HEK293T (cell line): ENCODE measurements at regions of chr11 and their contacts with region 1.

Region 1: DNA sequence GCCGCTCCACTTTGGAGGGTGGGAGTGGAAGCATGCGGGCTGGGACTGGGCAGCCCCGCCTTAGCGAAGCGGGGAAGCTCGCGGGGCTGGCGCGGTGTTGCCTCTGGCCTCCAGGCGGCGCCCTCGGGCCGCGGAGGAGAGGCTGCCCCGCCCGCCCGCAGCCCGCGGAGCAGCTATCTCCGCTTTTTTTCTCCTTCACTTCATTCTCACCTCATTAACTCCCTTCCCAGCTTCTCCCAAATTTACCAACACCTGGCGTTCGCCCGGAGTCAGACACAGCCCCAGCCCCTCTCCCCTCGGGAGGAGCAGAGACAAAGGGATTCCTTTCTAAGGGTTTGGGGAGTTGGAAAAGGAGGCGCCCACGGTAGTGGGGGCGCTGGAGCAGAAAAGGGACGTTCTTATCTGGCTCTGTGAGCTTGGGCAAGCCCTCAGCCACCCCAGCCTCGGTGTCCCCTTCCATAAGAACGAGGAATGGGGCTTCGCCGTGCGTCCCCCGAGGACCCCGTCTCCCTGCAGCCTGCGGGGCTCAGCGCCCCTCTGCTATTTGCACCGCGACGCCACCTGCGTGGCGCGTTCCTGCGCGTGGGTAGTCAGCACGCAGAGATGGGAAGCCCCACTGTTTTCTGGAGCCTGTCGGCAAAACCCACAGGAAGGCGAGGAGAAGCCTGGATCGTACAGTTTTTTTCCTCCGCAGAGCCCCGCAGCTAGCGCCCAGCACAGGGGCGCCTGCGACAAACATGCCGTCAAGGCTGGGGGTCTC is 1.5 kb upstream of the WNT11 start:
- DNase-seq: peak; percentile 90

Region 2: DNA sequence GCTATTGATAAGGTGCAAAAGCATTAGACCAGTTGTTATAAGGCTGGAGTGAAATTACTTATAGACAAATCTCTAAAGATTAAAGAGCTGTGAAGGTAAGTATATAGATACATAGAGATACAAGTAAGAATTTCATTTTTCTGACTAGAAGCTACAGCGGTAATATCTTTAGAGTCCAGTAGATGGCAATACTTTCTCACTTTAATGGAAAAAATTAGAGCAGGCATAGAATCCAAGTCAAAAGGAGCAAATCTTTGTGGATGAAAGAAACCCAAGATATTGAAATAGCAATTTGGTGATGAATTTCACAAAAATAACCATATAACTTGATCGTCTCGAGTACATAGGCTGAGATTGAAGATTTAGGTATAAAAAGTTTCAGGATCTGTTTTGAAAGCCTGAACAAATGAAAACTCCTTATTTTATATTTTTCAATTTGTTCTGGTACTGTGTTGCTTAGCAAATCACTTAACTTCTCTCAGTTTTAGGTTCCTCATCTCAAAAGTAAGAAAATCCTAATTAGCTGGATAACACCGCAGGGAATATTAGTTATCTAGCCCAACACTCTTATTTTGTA is 310.9 kb before region 1 on chr11:
- CTCF ChIA-PET with region 1: interaction called, 29 read pairs
- POLR2A ChIA-PET with region 1: interaction called, 3 read pairs
- DNase-seq: peak; percentile 28

Region 3: GRCh38 chr11:76235233-76236091 is 27.6 kb after region 1 on chr11:
- CTCF ChIA-PET with region 1: interaction called, 19 read pairs
- POLR2A ChIA-PET with region 1: interaction called, 60 read pairs
- DNase-seq: peak; percentile 96

Region 4: GRCh38 chr11:76318744-76319384 is 111.0 kb after region 1 on chr11:
- CTCF ChIA-PET with region 1: interaction called, 15 read pairs
- POLR2A ChIA-PET with region 1: interaction called, 18 read pairs
- DNase-seq: peak; percentile 86

Region 5: GRCh38 chr11:76444384-76445123 is 236.7 kb after region 1 on chr11 and contains the start of gene EMSY:
- CTCF ChIA-PET with region 1: no interaction called
- POLR2A ChIA-PET with region 1: no interaction called
- DNase-seq: peak; percentile 94

Region 6: GRCh38 chr11:76543006-76543703 is 335.3 kb after region 1 on chr11:
- CTCF ChIA-PET with region 1: no interaction called
- POLR2A ChIA-PET with region 1: no interaction called
- DNase-seq: no peak

Region 7: GRCh38 chr11:76598426-76598839 is 390.6 kb after region 1 on chr11:
- CTCF ChIA-PET with region 1: interaction called, 10 read pairs
- POLR2A ChIA-PET with region 1: no interaction called
- DNase-seq: peak; percentile 50